ENCODE measurements at regions of chr5 and their contacts with region 1.

Region 1: GRCh38 chr5:4941957-4942830 is 197.9 kb upstream of the ADAMTS16 start:
- DNase-seq: peak; percentile 87
- H3K4me3 ChIP-seq: peak overlapping the region in 1 of 2 experiments; percentile 23; a peak in 1 of 4 replicates
- H3K27ac ChIP-seq: no peak overlapping the region
- H3K4me1 ChIP-seq: peaks cover 0 to 7% of the 10 kb centered on the region in 2 experiments; a peak in 1 of 4 replicates
- H3K27me3 ChIP-seq: no peaks in the 10 kb centered on the region; the same call in 1 of the 2 replicates
- CTCF ChIP-seq: peak; percentile 91
- EP300 ChIP-seq: no peak
- RAD21 ChIP-seq: peak; percentile 61

Region 2: GRCh38 chr5:4921929-4922328 is 20.3 kb before region 1 on chr5:
- CTCF ChIA-PET with region 1: interaction called, 13 read pairs
- POLR2A ChIA-PET with region 1: no interaction called
- DNase-seq: no peak
- H3K4me3 ChIP-seq: no peak overlapping the region
- H3K27ac ChIP-seq: no peak overlapping the region
- H3K4me1 ChIP-seq: no peaks in the 10 kb centered on the region; a peak in 1 of 4 replicates
- H3K27me3 ChIP-seq: no peaks in the 10 kb centered on the region
- CTCF ChIP-seq: no peak
- EP300 ChIP-seq: no peak
- RAD21 ChIP-seq: no peak

Region 3: GRCh38 chr5:4953576-4953975 is 11.4 kb after region 1 on chr5:
- CTCF ChIA-PET with region 1: interaction called, 17 read pairs
- POLR2A ChIA-PET with region 1: no interaction called
- DNase-seq: no peak
- H3K4me3 ChIP-seq: no peak overlapping the region
- H3K27ac ChIP-seq: no peak overlapping the region
- H3K4me1 ChIP-seq: peaks cover 0 to 4% of the 10 kb centered on the region in 2 experiments; a peak in 2 of 4 replicates
- H3K27me3 ChIP-seq: no peaks in the 10 kb centered on the region
- CTCF ChIP-seq: no peak
- EP300 ChIP-seq: no peak
- RAD21 ChIP-seq: no peak

Region 4: GRCh38 chr5:4963265-4963664 is 21.1 kb after region 1 on chr5:
- CTCF ChIA-PET with region 1: interaction called, 16 read pairs
- POLR2A ChIA-PET with region 1: no interaction called
- DNase-seq: no peak
- H3K4me3 ChIP-seq: no peak overlapping the region
- H3K27ac ChIP-seq: peak overlapping the region in 1 of 2 experiments; percentile 68; a peak in 2 of 4 replicates
- H3K4me1 ChIP-seq: peaks cover 0 to 4% of the 10 kb centered on the region in 2 experiments; a peak in 1 of 4 replicates
- H3K27me3 ChIP-seq: no peaks in the 10 kb centered on the region
- CTCF ChIP-seq: no peak
- EP300 ChIP-seq: peak in 1 of 2 experiments; percentile 44; a peak in 1 of 4 replicates
- RAD21 ChIP-seq: no peak

Measured in SK-N-SH (cell line).